PC-9 (cell line): ENCODE measurements at regions of chr12 and their contacts with region 1.

Region 1: GRCh38 chr12:7638760-7639555 is 26.8 kb downstream of the APOBEC1 start:
- DNase-seq: peak; percentile 66 to 75
- H3K4me3 ChIP-seq: no peak overlapping the region
- H3K27ac ChIP-seq: no peak overlapping the region
- H3K4me1 ChIP-seq: no peaks in the 10 kb centered on the region
- H3K27me3 ChIP-seq: no peaks in the 10 kb centered on the region
- CTCF ChIP-seq: peak; percentile 96

Region 2: DNA sequence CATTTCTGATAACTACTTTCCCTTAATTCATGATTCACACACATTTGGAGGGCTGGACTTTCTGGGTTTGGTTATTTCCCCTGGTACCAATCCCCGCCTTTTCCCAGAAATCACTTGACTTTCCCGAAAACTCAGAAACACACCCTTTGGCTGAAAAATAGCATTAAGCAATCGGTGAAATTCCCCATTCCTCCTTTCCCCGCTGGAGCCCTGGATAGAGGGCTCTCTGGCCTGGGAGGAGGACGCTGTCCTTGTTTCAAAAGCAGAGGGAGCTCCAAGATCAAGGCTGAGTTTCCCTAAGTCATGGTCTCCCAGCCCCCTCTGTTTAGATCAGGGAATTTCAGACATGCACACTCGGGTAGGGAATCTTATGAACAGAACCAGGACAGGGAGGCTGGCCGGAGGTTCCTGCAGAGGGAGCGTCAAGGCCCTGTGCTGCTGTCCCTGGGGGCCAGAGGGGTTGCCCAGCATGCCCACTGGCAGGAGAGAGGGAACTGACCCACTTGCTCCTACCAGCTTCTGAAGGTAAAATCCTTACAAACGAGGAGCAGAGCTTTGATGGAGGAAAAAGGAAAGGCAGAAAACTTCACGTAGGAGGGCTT is 578.5 kb before region 1 on chr12 and contains the start of gene C1S:
- CTCF ChIA-PET with region 1: no interaction called
- POLR2A ChIA-PET with region 1: no interaction called
- intact Hi-C with region 1: loop called (anchors 1 kb)
- DNase-seq: peak; percentile 68 to 69
- H3K4me3 ChIP-seq: no peak within 1 kb of the TSS
- H3K27ac ChIP-seq: no peak within 1 kb of the TSS
- H3K4me1 ChIP-seq: peaks cover 16% of the 10 kb centered on the region; the same call in 1 of the 2 replicates
- H3K27me3 ChIP-seq: peaks cover 2% of the 10 kb centered on the region; the same call in 1 of the 2 replicates
- CTCF ChIP-seq: peak; percentile 73
- total RNA-seq, gene C1S: 32.4 and 32.9 TPM in 2 replicates

Region 3: DNA sequence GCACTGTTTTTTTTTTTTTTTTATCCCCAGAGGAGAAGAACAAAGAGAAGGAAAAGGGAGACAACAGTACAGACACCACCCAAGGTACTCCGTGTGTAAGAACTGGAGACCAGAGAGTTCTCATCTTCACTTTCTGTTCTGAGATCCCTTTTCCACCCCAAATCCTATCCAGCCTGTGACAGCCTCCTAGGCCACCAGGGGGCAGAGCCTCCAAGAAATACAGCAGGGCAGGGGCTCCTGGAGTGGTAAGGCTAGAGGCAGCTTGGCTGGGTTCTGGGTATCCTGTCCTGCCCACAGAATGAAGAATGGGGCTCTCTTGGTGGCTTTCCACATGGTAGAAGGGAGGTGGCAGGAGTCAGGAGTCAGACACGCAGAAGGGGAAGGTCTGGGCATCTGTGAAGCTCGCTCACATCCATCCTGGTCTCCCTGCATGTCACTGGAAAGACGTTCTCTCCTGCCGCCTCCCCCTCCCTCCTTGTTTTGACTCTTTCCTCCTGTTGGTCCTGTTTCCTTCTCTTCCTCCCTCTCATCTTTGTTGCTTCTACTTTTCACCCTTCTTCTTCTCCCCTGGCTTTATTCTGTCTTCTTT is 496.8 kb before region 1 on chr12:
- CTCF ChIA-PET with region 1: no interaction called
- POLR2A ChIA-PET with region 1: no interaction called
- intact Hi-C with region 1: loop called (anchors 2 kb)
- DNase-seq: peak; percentile 52 to 61
- H3K4me3 ChIP-seq: no peak overlapping the region
- H3K27ac ChIP-seq: no peak overlapping the region
- H3K4me1 ChIP-seq: no peaks in the 10 kb centered on the region
- H3K27me3 ChIP-seq: no peaks in the 10 kb centered on the region
- CTCF ChIP-seq: peak; percentile 91

Region 4: GRCh38 chr12:7219599-7220243 is 419.2 kb before region 1 on chr12:
- CTCF ChIA-PET with region 1: interaction called, 3 read pairs
- POLR2A ChIA-PET with region 1: no interaction called
- intact Hi-C with region 1: loop called (anchors 1 kb)
- DNase-seq: peak; percentile 60 to 69
- H3K4me3 ChIP-seq: no peak overlapping the region
- H3K27ac ChIP-seq: no peak overlapping the region
- H3K4me1 ChIP-seq: no peaks in the 10 kb centered on the region
- H3K27me3 ChIP-seq: no peaks in the 10 kb centered on the region
- CTCF ChIP-seq: peak; percentile 96

Region 5: GRCh38 chr12:7374423-7375144 is 264.4 kb before region 1 on chr12:
- CTCF ChIA-PET with region 1: no interaction called
- POLR2A ChIA-PET with region 1: no interaction called
- intact Hi-C with region 1: loop called (anchors 1 kb)
- DNase-seq: peak in 1 of 2 experiments; percentile 60
- H3K4me3 ChIP-seq: no peak overlapping the region
- H3K27ac ChIP-seq: no peak overlapping the region
- H3K4me1 ChIP-seq: no peaks in the 10 kb centered on the region
- H3K27me3 ChIP-seq: no peaks in the 10 kb centered on the region; the same call in 1 of the 2 replicates
- CTCF ChIP-seq: peak; percentile 56

Region 6: GRCh38 chr12:7460375-7461259 is 178.3 kb before region 1 on chr12:
- CTCF ChIA-PET with region 1: interaction called, 4 read pairs
- POLR2A ChIA-PET with region 1: no interaction called
- intact Hi-C with region 1: loop called (anchors 1 kb)
- DNase-seq: peak; percentile 56 to 74
- H3K4me3 ChIP-seq: no peak overlapping the region
- H3K27ac ChIP-seq: no peak overlapping the region
- H3K4me1 ChIP-seq: no peaks in the 10 kb centered on the region
- H3K27me3 ChIP-seq: no peaks in the 10 kb centered on the region
- CTCF ChIP-seq: peak; percentile 95

Region 7: GRCh38 chr12:7583571-7583970 is 55.4 kb before region 1 on chr12:
- CTCF ChIA-PET with region 1: interaction called, 4 read pairs
- POLR2A ChIA-PET with region 1: no interaction called
- intact Hi-C with region 1: loop called (anchors 1 kb)
- DNase-seq: no peak
- H3K4me3 ChIP-seq: no peak overlapping the region
- H3K27ac ChIP-seq: peak overlapping the region; percentile 82
- H3K4me1 ChIP-seq: peaks cover 20% of the 10 kb centered on the region
- H3K27me3 ChIP-seq: no peaks in the 10 kb centered on the region
- CTCF ChIP-seq: no peak